GM12878 (cell line): ENCODE measurements at regions of chr3 and their contacts with region 1.

Region 1: DNA sequence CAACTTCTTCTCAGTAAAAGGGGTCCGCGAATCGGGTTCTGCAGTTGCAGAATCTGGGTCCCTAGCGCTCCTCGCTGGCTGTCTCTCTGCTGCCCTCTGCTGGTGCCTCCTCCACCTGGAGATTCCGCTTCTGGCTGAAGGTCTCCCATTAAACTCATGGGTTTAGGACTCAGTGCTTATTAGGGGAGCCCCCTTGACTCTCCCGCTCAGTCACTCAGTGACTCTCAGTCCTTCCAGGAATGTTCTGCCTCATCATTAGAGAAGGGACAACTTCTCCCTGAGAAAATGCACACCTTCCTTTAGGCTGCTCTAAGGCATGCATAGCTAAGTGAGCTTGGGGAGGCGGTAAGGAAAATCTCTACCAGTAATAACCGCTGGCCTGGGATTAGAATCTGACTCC is 7.1 kb downstream of the CPN2 start:
- DNase-seq: no peak
- ATAC-seq: peak; percentile 89
- H3K4me3 ChIP-seq: no peak overlapping the region
- H3K27ac ChIP-seq: no peak overlapping the region
- H3K4me1 ChIP-seq: no peaks in the 10 kb centered on the region
- H3K27me3 ChIP-seq: no peaks in the 10 kb centered on the region; a peak in 3 of 4 replicates
- CTCF ChIP-seq: peak; percentile 84 to 97 (median 91)
- EP300 ChIP-seq: no peak
- POLR2A ChIP-seq: no peak
- RAD21 ChIP-seq: peak; percentile 64

Region 2: DNA sequence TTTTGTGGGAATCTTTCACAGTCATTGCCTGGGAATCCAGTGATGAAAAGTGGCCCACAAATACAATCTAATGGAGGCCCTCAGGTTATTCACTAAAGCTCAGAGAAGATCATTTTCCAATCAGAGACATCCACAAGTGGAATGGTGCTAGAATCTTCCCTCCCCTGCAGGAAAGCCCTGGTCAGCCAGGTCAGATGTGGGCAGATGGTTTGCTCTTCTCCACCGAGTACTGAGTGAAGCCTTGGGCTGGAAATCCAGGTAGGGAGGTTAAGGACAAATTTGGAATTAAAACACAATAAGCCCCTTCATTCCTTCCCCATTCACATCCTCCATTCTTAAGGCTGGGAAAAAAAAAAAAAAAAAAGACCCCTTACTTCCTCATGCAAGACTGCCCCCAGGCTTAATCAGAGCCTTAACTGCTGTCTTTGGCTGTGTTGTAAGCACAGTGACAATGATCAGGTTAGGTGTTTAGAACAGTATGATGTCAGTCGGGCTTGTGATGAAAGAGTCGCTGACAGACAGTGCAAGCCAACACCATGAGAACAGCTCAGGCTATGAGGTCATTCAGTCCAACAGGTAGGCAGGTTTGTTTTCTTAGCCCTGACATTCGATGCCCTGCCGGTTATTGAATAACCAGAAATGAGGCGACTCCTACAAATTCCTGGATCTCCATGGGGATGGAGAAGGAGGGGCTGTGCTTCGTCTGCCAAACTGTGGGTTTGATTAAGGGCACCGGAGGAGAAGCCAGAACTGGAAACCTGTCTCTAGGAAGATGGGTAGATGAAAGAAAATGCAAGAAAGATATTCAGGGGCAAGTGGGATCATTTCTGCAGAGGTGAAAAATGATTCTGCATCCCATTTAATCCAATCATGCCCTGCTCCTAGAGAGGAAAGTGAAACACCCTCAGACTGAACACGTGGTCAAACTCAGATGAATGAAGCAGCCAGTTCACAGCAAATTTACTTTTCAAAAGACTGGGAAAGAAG is 231.6 kb before region 1 on chr3:
- CTCF ChIA-PET with region 1: no interaction called
- POLR2A ChIA-PET with region 1: no interaction called
- RAD21 ChIA-PET with region 1: no interaction called
- SMC1A ChIA-PET with region 1: no interaction called
- in situ Hi-C with region 1: no loop called
- intact Hi-C with region 1: no loop called
- DNase-seq: no peak
- ATAC-seq: no peak
- H3K4me3 ChIP-seq: no peak overlapping the region
- H3K27ac ChIP-seq: no peak overlapping the region
- H3K4me1 ChIP-seq: no peaks in the 10 kb centered on the region
- H3K27me3 ChIP-seq: no peaks in the 10 kb centered on the region; a peak in 2 of 4 replicates
- CTCF ChIP-seq: no peak
- EP300 ChIP-seq: no peak
- POLR2A ChIP-seq: no peak
- RAD21 ChIP-seq: no peak

Region 3: DNA sequence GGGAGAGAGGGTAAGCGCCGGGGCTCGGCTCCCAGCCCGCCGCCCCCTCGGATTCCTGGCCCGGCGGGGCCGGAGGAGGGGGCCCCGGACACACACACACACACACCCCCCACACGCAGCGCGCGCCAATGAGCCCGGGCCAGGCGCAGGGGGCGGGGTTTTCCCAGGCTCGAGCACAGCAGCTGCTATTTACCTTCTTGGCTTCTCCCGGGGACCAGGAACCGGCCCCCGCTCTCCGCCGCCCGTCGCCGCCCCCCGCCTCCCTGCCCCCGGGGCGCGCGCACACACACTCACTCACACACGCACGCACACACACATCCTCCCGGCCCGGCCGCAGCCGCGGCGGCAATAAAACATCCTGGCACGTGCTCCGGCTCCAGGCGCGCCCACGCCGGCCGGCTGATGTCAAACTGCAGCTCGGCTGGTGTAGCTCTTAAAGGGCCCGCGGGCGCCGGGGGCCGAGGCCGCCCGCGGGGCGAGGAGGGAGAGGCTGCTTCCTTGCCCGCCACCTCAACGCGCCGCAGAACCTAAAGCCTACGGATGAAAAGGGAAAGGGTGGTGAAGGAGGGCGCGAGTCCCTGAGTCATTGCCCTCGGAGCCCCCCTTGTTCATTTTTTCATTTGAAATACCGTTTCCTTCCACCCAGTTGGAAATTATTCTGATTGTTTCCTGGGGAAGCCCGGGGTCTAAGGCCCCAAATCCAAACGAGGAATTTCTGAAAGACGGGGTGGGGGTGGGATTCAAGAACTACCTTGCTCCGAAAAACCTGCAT is 209.1 kb before region 1 on chr3:
- CTCF ChIA-PET with region 1: no interaction called
- POLR2A ChIA-PET with region 1: no interaction called
- RAD21 ChIA-PET with region 1: no interaction called
- SMC1A ChIA-PET with region 1: no interaction called
- in situ Hi-C with region 1: no loop called
- intact Hi-C with region 1: no loop called
- DNase-seq: peak; percentile 55
- ATAC-seq: peak; percentile 64
- H3K4me3 ChIP-seq: peak overlapping the region; percentile 61
- H3K27ac ChIP-seq: peak overlapping the region; percentile 31; the same call in 1 of the 2 replicates
- H3K4me1 ChIP-seq: peaks cover 27% of the 10 kb centered on the region
- H3K27me3 ChIP-seq: peaks cover 1 to 3% of the 10 kb centered on the region in 2 experiments; a peak in 3 of 4 replicates
- CTCF ChIP-seq: no peak
- EP300 ChIP-seq: peak in 1 of 2 experiments; percentile 55; a peak in 1 of 4 replicates
- POLR2A ChIP-seq: 0 out of 2 replicates have a peak, but pooled peaks have one; percentile 16
- RAD21 ChIP-seq: no peak

Region 4: GRCh38 chr3:194333212-194333980 is 10.6 kb before region 1 on chr3:
- CTCF ChIA-PET with region 1: interaction called, 64 read pairs
- POLR2A ChIA-PET with region 1: no interaction called
- RAD21 ChIA-PET with region 1: interaction called, 7 read pairs
- SMC1A ChIA-PET with region 1: interaction called, 13 read pairs
- in situ Hi-C with region 1: no loop called
- intact Hi-C with region 1: no loop called
- DNase-seq: no peak
- ATAC-seq: peak; percentile 99
- H3K4me3 ChIP-seq: peak overlapping the region; percentile 49; the same call in 1 of the 2 replicates
- H3K27ac ChIP-seq: no peak overlapping the region
- H3K4me1 ChIP-seq: no peaks in the 10 kb centered on the region
- H3K27me3 ChIP-seq: peaks cover 0 to 7% of the 10 kb centered on the region in 2 experiments; a peak in 3 of 4 replicates
- CTCF ChIP-seq: peak; percentile 95 to 99 (median 97); a peak in 5 of 6 replicates
- EP300 ChIP-seq: no peak
- POLR2A ChIP-seq: no peak
- RAD21 ChIP-seq: peak; percentile 96

Region 5: GRCh38 chr3:194353956-194354714 is 10.1 kb after region 1 on chr3:
- CTCF ChIA-PET with region 1: interaction called, 18 read pairs
- POLR2A ChIA-PET with region 1: no interaction called
- RAD21 ChIA-PET with region 1: no interaction called
- SMC1A ChIA-PET with region 1: interaction called, 6 read pairs
- in situ Hi-C with region 1: no loop called
- intact Hi-C with region 1: no loop called
- DNase-seq: no peak
- ATAC-seq: no peak
- H3K4me3 ChIP-seq: no peak overlapping the region
- H3K27ac ChIP-seq: no peak overlapping the region
- H3K4me1 ChIP-seq: no peaks in the 10 kb centered on the region
- H3K27me3 ChIP-seq: peaks cover 0 to 3% of the 10 kb centered on the region in 2 experiments; a peak in 2 of 4 replicates
- CTCF ChIP-seq: no peak
- EP300 ChIP-seq: no peak
- POLR2A ChIP-seq: no peak
- RAD21 ChIP-seq: no peak